AG04450 (cell line): ENCODE measurements at regions of chr5 and their contacts with region 1.

Region 1: GRCh38 chr5:80093796-80094195 is 58.6 kb downstream of the THBS4 start:
- DNase-seq: no peak
- H3K4me3 ChIP-seq: no peak overlapping the region
- H3K27ac ChIP-seq: no peak overlapping the region
- H3K27me3 ChIP-seq: peaks cover 2% of the 10 kb centered on the region
- CTCF ChIP-seq: no peak

Region 2: DNA sequence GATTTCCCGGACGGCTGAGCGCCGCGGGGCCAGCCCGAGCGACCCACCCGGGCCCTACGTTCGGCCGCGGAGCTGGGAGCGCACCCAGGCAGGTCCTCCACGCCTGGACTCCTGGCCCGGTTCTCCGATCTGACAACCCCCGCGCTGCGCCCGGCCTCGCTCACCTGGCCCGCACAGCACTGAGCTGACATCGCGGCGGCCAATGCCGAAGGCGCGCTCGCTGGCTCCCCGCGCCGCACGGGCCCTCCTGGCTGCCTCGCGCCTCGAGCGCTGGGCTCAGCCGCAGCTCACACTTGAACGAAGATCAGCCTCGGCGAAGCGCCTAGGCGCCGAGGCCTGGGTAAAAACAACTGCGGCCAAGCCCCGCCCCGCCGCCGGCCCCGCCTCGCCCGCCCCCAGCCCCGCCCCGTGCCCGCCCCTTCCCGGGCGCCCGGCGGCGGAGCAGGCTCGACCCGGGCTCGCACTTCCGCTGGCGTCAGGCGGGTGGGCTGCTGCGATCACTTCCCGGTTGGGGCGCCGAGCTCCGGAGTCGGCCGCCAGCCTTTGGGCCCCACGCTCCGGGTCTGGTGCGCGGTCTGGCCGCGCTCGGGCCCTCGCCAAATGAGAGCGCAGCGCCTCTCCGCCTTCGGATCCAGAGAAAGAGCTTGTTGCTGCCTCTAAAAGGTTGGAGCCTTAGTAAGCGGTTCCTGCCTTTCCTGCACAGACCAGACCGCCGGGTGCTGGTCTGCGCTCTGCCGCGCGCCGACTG is 162.1 kb after region 1 on chr5 and contains the start of gene SERINC5:
- CTCF ChIA-PET with region 1: interaction called, 23 read pairs
- POLR2A ChIA-PET with region 1: interaction called, 5 read pairs
- DNase-seq: no peak
- H3K4me3 ChIP-seq: peak within 1 kb of the TSS; percentile 79
- H3K27ac ChIP-seq: peak within 1 kb of the TSS; percentile 89
- H3K27me3 ChIP-seq: no peaks in the 10 kb centered on the region
- CTCF ChIP-seq: no peak
- polyA plus RNA-seq, gene SERINC5: 7.3 and 8.5 TPM in 2 replicates

Region 3: GRCh38 chr5:80275347-80275746 is 181.6 kb after region 1 on chr5:
- CTCF ChIA-PET with region 1: interaction called, 32 read pairs
- POLR2A ChIA-PET with region 1: no interaction called
- DNase-seq: no peak
- H3K4me3 ChIP-seq: no peak overlapping the region
- H3K27ac ChIP-seq: no peak overlapping the region
- H3K27me3 ChIP-seq: no peaks in the 10 kb centered on the region
- CTCF ChIP-seq: peak; percentile 49

Region 4: GRCh38 chr5:80308526-80308925 is 214.7 kb after region 1 on chr5:
- CTCF ChIA-PET with region 1: interaction called, 235 read pairs
- POLR2A ChIA-PET with region 1: interaction called, 3 read pairs
- DNase-seq: no peak
- H3K4me3 ChIP-seq: no peak overlapping the region
- H3K27ac ChIP-seq: no peak overlapping the region
- H3K27me3 ChIP-seq: no peaks in the 10 kb centered on the region
- CTCF ChIP-seq: no peak

Region 5: GRCh38 chr5:80672140-80672736 is 578.4 kb after region 1 on chr5:
- CTCF ChIA-PET with region 1: interaction called, 13 read pairs
- POLR2A ChIA-PET with region 1: no interaction called
- DNase-seq: peak; percentile 24
- H3K4me3 ChIP-seq: no peak overlapping the region
- H3K27ac ChIP-seq: no peak overlapping the region
- H3K27me3 ChIP-seq: no peaks in the 10 kb centered on the region
- CTCF ChIP-seq: peak; percentile 89

Region 6: GRCh38 chr5:80926979-80927656 is 833.3 kb after region 1 on chr5:
- CTCF ChIA-PET with region 1: interaction called, 12 read pairs
- POLR2A ChIA-PET with region 1: no interaction called
- DNase-seq: no peak
- H3K4me3 ChIP-seq: no peak overlapping the region
- H3K27ac ChIP-seq: no peak overlapping the region
- H3K27me3 ChIP-seq: no peaks in the 10 kb centered on the region
- CTCF ChIP-seq: no peak